ENCODE measurements at regions of chr6 and their contacts with region 1.

Region 1: GRCh38 chr6:167047554-167047953 is 48.4 kb downstream of the CEP43 start:
- DNase-seq: peak; percentile 88
- H3K4me3 ChIP-seq: peak overlapping the region; percentile 60
- H3K27ac ChIP-seq: peak overlapping the region; percentile 94
- H3K4me1 ChIP-seq: peaks cover 74% of the 10 kb centered on the region
- CTCF ChIP-seq: no peak

Region 2: GRCh38 chr6:166950443-166950821 is 97.1 kb before region 1 on chr6:
- CTCF ChIA-PET with region 1: no interaction called
- POLR2A ChIA-PET with region 1: interaction called, 10 read pairs
- intact Hi-C with region 1: loop called (anchors 2 kb)
- DNase-seq: peak; percentile 66
- H3K4me3 ChIP-seq: peak overlapping the region; percentile 64
- H3K27ac ChIP-seq: peak overlapping the region; percentile 87
- H3K4me1 ChIP-seq: peaks cover 60% of the 10 kb centered on the region
- CTCF ChIP-seq: no peak

Region 3: GRCh38 chr6:166999145-166999883 is 48.2 kb before region 1 on chr6 and contains the start of gene CEP43:
- CTCF ChIA-PET with region 1: interaction called, 11 read pairs
- POLR2A ChIA-PET with region 1: interaction called, 6 read pairs
- intact Hi-C with region 1: no loop called
- DNase-seq: peak; percentile 96
- H3K4me3 ChIP-seq: peak within 1 kb of the TSS; percentile 95
- H3K27ac ChIP-seq: peak within 1 kb of the TSS; percentile 65
- H3K4me1 ChIP-seq: peaks cover 33% of the 10 kb centered on the region
- CTCF ChIP-seq: 0 out of 2 replicates have a peak, but pooled peaks have one; percentile 1
- total RNA-seq, gene CEP43: 41.2 and 48.1 TPM in 2 replicates

Region 4: GRCh38 chr6:167093922-167094432 is 46.4 kb after region 1 on chr6:
- CTCF ChIA-PET with region 1: interaction called, 3 read pairs
- POLR2A ChIA-PET with region 1: interaction called, 30 read pairs
- intact Hi-C with region 1: loop called (anchors 5 kb)
- DNase-seq: no peak
- H3K4me3 ChIP-seq: peak overlapping the region; percentile 44
- H3K27ac ChIP-seq: peak overlapping the region; percentile 72
- H3K4me1 ChIP-seq: peaks cover 92% of the 10 kb centered on the region
- CTCF ChIP-seq: no peak

Region 5: GRCh38 chr6:167119670-167120381 is 72.3 kb after region 1 on chr6:
- CTCF ChIA-PET with region 1: interaction called, 3 read pairs
- POLR2A ChIA-PET with region 1: interaction called, 19 read pairs
- intact Hi-C with region 1: no loop called
- DNase-seq: peak; percentile 69
- H3K4me3 ChIP-seq: no peak overlapping the region
- H3K27ac ChIP-seq: peak overlapping the region; percentile 7
- H3K4me1 ChIP-seq: peaks cover 89% of the 10 kb centered on the region
- CTCF ChIP-seq: peak; percentile 80